Heart left ventricle (tissue), 16 donors: ENCODE measurements at regions of chr5 and their contacts with region 1.

Region 1: GRCh38 chr5:131165119-131165727 is at the start of gene HINT1:
- DNase-seq: peak; percentile 92 to 97 (median 93)
- ATAC-seq: peak; percentile 92 to 98 (median 96)
- H3K4me3 ChIP-seq: peak within 1 kb of the TSS; percentile 72 to 97 (median 88)
- H3K27ac ChIP-seq: peak within 1 kb of the TSS; percentile 83 to 98 (median 94)
- H3K4me1 ChIP-seq: peaks cover 0 to 29% (median 16%) of the 10 kb centered on the region in 12 donors
- H3K27me3 ChIP-seq: no peaks in the 10 kb centered on the region
- CTCF ChIP-seq: peak in 3 of 12 donors; percentile 23 to 45 (median 37)
- POLR2A ChIP-seq: peak in 1 of 2 donors; percentile 56
- total RNA-seq, gene HINT1: 76.8 to 165 (median 148) TPM

Region 2: DNA sequence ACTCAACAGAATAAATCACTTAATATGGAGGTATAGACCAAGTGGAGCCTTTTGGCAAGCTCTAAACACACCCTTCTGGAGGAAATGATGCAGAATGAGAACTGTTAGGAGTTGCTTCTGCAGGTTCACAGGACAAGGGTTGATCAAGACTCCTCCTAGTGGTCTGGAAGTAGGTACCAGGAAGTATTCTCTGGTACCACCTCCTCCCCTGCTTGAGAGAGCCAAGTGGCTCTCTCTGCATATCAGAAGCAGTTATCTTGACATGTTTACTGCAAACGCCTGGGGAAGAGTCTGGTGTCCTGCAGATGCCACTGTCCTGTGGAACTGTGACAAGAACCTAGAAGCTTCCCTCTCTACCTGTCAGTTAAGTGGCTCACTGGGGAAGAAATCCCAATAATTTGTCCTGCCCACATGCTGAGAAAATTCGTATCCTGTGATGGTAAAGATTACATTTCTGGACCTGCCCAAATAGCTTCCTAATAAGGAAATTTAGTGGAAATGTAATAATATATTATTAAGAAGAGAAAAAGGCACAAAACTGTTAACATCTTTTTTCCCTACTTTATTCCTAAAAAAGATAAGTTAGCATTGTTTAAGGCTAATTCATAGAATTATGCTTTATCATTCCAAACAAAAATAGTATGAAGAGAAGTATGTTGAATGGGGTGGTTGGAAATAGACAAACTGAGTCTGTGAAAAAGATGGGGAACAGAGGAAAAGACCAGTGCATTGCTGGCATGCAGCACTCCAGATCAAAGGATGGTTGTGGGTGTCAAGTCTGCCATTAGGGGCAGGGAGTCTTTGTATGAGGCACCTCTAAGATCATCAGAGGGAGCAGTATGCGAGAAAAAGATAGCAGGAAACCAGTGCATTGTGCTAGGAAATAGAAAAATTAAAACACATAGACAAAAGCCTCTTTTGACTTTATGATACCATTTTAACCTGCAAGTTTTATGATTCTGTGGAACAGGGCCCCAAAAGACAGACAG is 217.5 kb after region 1 on chr5:
- intact Hi-C with region 1: loop called in 2 of 10 experiments (anchors 10 kb)
- DNase-seq: no peak
- ATAC-seq: peak in 3 of 4 donors; percentile 53 to 76 (median 57)
- H3K4me3 ChIP-seq: no peak overlapping the region
- H3K27ac ChIP-seq: peak overlapping the region in 1 of 12 donors; percentile 92
- H3K4me1 ChIP-seq: peaks cover 0 to 77% (median 13%) of the 10 kb centered on the region in 12 donors
- H3K27me3 ChIP-seq: no peaks in the 10 kb centered on the region
- CTCF ChIP-seq: peak in 11 of 12 donors; percentile 5 to 46 (median 32)
- POLR2A ChIP-seq: no peak

Region 3: DNA sequence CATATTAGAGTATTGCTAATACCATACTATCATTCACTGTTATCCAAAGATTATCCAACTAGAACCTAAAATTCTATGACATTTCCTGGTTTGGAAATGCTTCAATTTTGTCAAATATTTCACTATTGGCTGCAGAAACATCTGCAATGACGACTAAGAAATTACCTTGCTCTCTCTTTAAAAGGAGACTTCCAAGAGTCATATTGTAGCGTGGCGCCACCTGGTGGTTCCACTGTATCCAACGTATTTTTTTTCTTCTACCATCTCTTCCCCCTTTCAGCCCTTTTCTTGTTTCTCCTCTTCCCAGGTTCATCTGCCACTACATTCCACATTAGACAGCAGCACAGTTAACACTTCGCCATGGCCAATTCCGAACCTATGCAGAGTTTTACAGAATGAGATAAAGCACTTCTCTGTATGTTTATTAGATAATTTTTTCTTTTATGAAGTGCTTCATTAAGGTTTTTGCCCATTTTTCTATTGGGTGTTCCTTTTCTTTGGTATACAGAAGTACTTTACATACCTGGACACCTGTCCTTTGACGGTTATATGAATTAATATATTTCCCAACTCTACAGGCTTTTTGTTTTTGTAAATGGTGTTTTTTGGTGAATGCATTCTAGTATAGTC is 252.1 kb after region 1 on chr5:
- intact Hi-C with region 1: loop called (anchors 1 to 10 kb)
- DNase-seq: peak; percentile 49 to 86 (median 70)
- ATAC-seq: peak in 2 of 4 donors; percentile 47 to 59
- H3K4me3 ChIP-seq: no peak overlapping the region
- H3K27ac ChIP-seq: no peak overlapping the region
- H3K4me1 ChIP-seq: peaks cover 0 to 6% (median 0%) of the 10 kb centered on the region in 12 donors
- H3K27me3 ChIP-seq: no peaks in the 10 kb centered on the region
- CTCF ChIP-seq: peak; percentile 71 to 93 (median 84)
- POLR2A ChIP-seq: no peak